HepG2 (cell line): ENCODE measurements at regions of chr3 and their contacts with region 1.

Region 1: DNA sequence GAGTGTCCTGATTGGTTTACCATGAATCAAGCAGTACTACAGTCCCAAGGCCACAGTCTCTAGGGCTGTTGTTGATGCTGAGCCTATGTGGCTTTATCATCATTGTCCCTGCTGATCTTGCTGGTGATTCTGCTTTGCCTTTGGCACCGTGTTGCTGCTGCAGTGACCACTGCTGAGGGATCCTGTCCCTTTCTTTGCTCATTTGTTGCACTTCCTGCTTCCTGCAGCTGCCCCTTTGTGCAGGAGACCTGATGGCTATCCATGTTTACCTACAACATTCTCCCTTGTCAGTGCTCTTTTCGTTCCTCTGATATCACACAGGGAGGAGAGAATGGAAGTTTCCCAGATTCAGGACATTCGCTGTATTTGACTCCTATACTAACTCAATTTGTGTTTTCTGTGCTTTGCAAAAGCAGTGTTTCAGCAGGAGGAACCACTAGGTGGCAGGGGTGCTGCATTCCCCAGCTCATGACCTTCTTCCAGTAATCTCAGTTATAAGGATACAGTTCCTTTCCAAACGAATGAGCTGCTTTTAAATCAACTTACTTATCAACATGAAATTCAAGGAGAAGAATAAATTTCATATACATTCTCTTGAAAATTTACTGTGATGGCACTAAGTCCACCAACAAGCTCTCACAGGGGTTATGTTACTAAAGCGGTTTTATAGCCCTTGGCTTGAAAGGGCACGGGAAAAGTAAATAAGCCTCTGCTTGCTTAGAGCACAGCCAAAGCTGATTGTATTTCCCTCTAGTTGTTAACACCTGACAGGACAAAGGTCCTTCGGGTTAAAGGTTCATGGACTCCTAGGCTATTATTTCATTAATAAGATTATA is 9.7 kb upstream of the THUMPD3 start:
- DNase-seq: peak; percentile 88
- ATAC-seq: peak; percentile 96
- H3K4me3 ChIP-seq: peak overlapping the region; percentile 0 to 59 (median 56)
- H3K27ac ChIP-seq: peak overlapping the region; percentile 84
- H3K4me1 ChIP-seq: peaks cover 40% of the 10 kb centered on the region
- H3K27me3 ChIP-seq: no peaks in the 10 kb centered on the region
- CTCF ChIP-seq: peak; percentile 91
- EP300 ChIP-seq: peak in 1 of 2 experiments; percentile 69; a peak in 2 of 4 replicates
- POLR2A ChIP-seq: no peak
- RAD21 ChIP-seq: peak; percentile 73

Region 2: DNA sequence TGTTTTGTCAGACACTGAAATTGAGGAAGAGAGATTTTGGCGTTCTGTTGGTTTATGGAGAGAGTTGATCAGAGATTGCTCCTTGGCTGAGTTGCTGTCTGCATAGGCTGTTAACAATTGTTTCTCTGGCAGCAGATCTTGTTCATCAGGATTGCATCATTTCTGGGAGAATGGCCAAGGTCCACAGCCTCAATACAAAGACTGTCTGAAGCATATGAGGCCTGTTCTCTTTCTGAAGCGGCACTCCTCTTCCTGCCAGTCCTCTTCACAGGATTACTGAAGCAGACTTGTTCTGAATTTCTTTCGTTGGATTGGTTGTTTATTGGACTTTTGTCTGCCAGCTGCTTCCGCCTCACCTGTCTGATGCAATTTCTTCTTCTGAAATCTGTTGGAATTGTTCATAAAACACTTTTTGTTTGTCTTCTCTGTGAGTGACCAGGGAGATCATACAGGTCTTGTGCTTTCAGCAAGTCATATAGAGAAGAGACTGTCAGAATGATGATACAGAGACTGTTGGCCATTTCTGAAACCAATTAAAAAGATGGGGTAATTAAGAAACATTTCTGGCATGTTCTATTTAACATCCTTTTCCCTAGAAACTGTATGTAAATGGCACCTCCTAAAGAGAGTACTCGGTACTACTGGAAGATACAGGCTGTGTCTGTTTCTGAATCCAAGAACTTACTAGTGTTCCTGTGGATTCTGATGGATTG is 69.7 kb after region 1 on chr3:
- CTCF ChIA-PET with region 1: interaction called, 4 read pairs
- POLR2A ChIA-PET with region 1: interaction called, 6 read pairs
- in situ Hi-C with region 1: no loop called
- intact Hi-C with region 1: loop called (anchors 1 kb)
- DNase-seq: peak; percentile 98
- ATAC-seq: peak; percentile 99
- H3K4me3 ChIP-seq: peak overlapping the region in 2 of 3 experiments; percentile 15 to 35; a peak in 3 of 6 replicates
- H3K27ac ChIP-seq: peak overlapping the region; percentile 60
- H3K4me1 ChIP-seq: peaks cover 89% of the 10 kb centered on the region
- H3K27me3 ChIP-seq: no peaks in the 10 kb centered on the region
- CTCF ChIP-seq: peak; percentile 40
- EP300 ChIP-seq: peak in 1 of 2 experiments; percentile 32; a peak in 2 of 4 replicates
- POLR2A ChIP-seq: peak; percentile 24 to 67; a peak in 2 of 4 replicates
- RAD21 ChIP-seq: peak; percentile 58

Region 3: DNA sequence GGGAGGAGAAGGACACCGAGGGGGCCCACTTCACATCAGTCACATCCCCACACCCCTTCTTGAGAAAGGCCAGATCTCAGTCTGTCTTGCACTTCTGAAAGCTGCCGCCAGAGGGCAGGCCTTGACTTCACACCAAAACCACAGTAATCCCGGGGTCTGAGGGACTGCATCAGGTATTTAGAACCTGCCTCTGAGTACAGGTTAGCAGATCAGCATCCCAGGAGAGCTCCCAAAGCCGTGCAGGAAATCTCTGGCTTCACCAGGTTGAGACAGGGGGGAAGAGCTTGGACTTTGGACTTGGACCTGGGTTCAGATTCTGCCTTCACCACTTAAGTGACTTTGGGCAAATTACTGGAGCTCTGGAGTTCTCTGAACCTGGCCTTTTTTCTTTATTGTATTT is 150.1 kb after region 1 on chr3:
- CTCF ChIA-PET with region 1: no interaction called
- POLR2A ChIA-PET with region 1: no interaction called
- in situ Hi-C with region 1: no loop called
- intact Hi-C with region 1: loop called (anchors 1 kb)
- DNase-seq: peak; percentile 72
- ATAC-seq: peak; percentile 31
- H3K4me3 ChIP-seq: no peak overlapping the region
- H3K27ac ChIP-seq: no peak overlapping the region
- H3K4me1 ChIP-seq: peaks cover 8% of the 10 kb centered on the region
- H3K27me3 ChIP-seq: peaks cover 2 to 36% of the 10 kb centered on the region in 2 experiments; a peak in 3 of 5 replicates
- CTCF ChIP-seq: peak; percentile 88
- EP300 ChIP-seq: no peak
- POLR2A ChIP-seq: no peak
- RAD21 ChIP-seq: peak; percentile 74

Region 4: GRCh38 chr3:9649791-9650521 is 296.8 kb after region 1 on chr3:
- CTCF ChIA-PET with region 1: no interaction called
- POLR2A ChIA-PET with region 1: no interaction called
- in situ Hi-C with region 1: no loop called
- intact Hi-C with region 1: loop called (anchors 10 kb)
- DNase-seq: no peak
- ATAC-seq: peak; percentile 15
- H3K4me3 ChIP-seq: peak overlapping the region; percentile 76 to 98 (median 79)
- H3K27ac ChIP-seq: peak overlapping the region; percentile 39
- H3K4me1 ChIP-seq: peaks cover 15% of the 10 kb centered on the region
- H3K27me3 ChIP-seq: no peaks in the 10 kb centered on the region
- CTCF ChIP-seq: no peak
- EP300 ChIP-seq: no peak
- POLR2A ChIP-seq: no peak
- RAD21 ChIP-seq: no peak

Region 5: GRCh38 chr3:10015461-10015904 is 662.3 kb after region 1 on chr3:
- CTCF ChIA-PET with region 1: no interaction called
- POLR2A ChIA-PET with region 1: no interaction called
- in situ Hi-C with region 1: no loop called
- intact Hi-C with region 1: no loop called
- DNase-seq: no peak
- ATAC-seq: no peak
- H3K4me3 ChIP-seq: no peak overlapping the region
- H3K27ac ChIP-seq: no peak overlapping the region
- H3K4me1 ChIP-seq: peaks cover 6% of the 10 kb centered on the region; the same call in 1 of the 2 replicates
- H3K27me3 ChIP-seq: no peaks in the 10 kb centered on the region
- CTCF ChIP-seq: no peak
- EP300 ChIP-seq: no peak
- POLR2A ChIP-seq: no peak
- RAD21 ChIP-seq: no peak